ENCODE measurements at regions of chr17 and their contacts with region 1.

Region 1: GRCh38 chr17:78745407-78746088 is 36.5 kb downstream of the CYTH1 start:
- DNase-seq: peak in 4 of 5 donors; percentile 56 to 61 (median 60)
- H3K4me3 ChIP-seq: peak overlapping the region; percentile 9 to 31
- H3K4me3 Mint-ChIP-seq: peak overlapping the region; percentile 67 to 89 (median 78)
- H3K27ac ChIP-seq: peak overlapping the region; percentile 73
- H3K27ac Mint-ChIP-seq: peak overlapping the region; percentile 88 to 98 (median 94)
- H3K4me1 ChIP-seq: peaks cover 98% of the 10 kb centered on the region
- H3K4me1 Mint-ChIP-seq: peaks cover 76 to 98% (median 85%) of the 10 kb centered on the region in 4 donors
- H3K27me3 ChIP-seq: no peaks in the 10 kb centered on the region
- H3K27me3 Mint-ChIP-seq: no peaks in the 10 kb centered on the region

Region 2: GRCh38 chr17:78723001-78723796 is 22.3 kb before region 1 on chr17:
- CTCF ChIA-PET with region 1: interaction called, 8 read pairs
- POLR2A ChIA-PET with region 1: interaction called, 125 read pairs
- intact Hi-C with region 1: no loop called
- DNase-seq: no peak
- H3K4me3 ChIP-seq: no peak overlapping the region
- H3K4me3 Mint-ChIP-seq: peak overlapping the region; percentile 56 to 91 (median 70)
- H3K27ac ChIP-seq: no peak overlapping the region
- H3K27ac Mint-ChIP-seq: peak overlapping the region in 6 of 7 donors; percentile 77 to 92 (median 86)
- H3K4me1 ChIP-seq: peaks cover 100% of the 10 kb centered on the region
- H3K4me1 Mint-ChIP-seq: peaks cover 77 to 97% (median 90%) of the 10 kb centered on the region in 4 donors
- H3K27me3 ChIP-seq: no peaks in the 10 kb centered on the region
- H3K27me3 Mint-ChIP-seq: no peaks in the 10 kb centered on the region

Region 3: DNA sequence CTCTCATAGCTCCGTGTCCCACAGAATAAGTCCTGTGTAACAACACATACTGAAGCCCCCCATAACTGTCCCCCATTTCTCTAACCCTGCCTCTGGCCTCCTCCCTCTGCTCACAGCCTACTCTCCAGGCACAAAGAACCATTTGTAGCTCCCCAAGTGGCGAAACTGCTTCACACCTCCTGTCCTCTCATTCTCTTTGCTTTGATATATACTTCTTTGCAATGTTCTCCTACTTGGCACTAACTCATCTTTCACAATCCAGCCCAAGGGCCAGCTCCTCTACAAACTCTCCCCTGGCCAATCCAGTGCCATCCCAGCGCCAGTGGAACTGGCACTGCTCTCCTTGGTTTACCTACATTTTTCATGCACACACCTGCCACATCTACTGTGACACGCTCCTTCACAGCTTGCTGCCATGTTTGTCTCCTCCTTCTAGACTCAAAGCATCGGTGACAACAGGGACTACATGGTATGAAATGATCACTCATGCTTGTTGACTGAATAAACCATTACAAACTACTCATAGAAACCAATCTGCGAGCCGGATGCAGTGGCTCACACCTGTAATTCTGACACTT is 23.7 kb after region 1 on chr17:
- CTCF ChIA-PET with region 1: interaction called, 21 read pairs
- POLR2A ChIA-PET with region 1: interaction called, 961 read pairs
- intact Hi-C with region 1: no loop called
- DNase-seq: peak in 2 of 5 donors; percentile 44 to 54
- H3K4me3 ChIP-seq: peak overlapping the region in 1 of 2 donors; percentile 7
- H3K4me3 Mint-ChIP-seq: no peak overlapping the region
- H3K27ac ChIP-seq: peak overlapping the region; percentile 49
- H3K27ac Mint-ChIP-seq: no peak overlapping the region
- H3K4me1 ChIP-seq: peaks cover 98% of the 10 kb centered on the region
- H3K4me1 Mint-ChIP-seq: peaks cover 32 to 34% (median 33%) of the 10 kb centered on the region in 4 donors
- H3K27me3 ChIP-seq: no peaks in the 10 kb centered on the region
- H3K27me3 Mint-ChIP-seq: no peaks in the 10 kb centered on the region

Region 4: DNA sequence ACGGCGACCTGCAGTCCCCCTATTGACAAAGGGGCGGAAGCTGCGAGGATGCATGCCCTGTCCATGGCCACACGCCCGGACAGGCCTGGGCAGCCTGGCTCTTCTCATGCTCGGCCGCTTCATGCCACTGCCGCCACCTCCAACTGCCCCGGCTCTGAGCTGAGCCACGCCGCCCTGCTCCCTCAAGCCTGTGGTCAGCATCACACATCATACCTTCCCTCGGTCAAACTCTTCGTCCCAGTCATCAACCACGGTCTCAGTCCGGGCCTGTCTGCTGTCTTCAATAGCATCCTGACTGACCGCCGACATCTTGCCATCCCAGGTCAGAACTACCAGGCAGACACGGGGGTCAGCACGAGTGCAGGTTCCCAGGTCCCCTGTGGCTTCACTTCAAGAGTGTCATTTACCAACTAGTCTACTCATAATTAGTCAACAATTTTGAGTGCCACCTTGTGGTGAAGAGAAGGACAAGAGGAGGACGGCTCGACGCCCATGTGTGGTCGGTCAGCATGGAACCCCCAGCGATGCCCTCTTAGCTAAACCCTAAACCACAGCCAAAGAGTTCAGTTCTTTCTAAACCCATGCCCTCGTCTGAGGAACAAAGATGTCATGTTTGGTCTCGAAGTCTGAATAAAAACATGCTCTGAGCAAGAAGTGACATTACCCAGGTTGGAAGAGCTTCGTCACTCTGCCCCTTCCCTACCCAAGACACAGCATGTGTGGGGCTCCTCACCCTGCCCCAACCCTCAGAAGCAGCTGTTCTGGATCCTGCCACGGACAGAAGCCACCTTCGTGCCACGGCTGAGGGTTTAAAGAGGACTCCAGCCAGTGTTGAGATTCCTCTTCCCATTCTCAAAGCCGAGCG is 53.4 kb after region 1 on chr17:
- CTCF ChIA-PET with region 1: interaction called, 15 read pairs
- POLR2A ChIA-PET with region 1: interaction called, 4 read pairs
- intact Hi-C with region 1: loop called (anchors 1 kb)
- DNase-seq: peak in 4 of 5 donors; percentile 50 to 65 (median 57)
- H3K4me3 ChIP-seq: no peak overlapping the region
- H3K4me3 Mint-ChIP-seq: peak overlapping the region; percentile 28 to 79 (median 66)
- H3K27ac ChIP-seq: no peak overlapping the region
- H3K27ac Mint-ChIP-seq: peak overlapping the region; percentile 87 to 99 (median 94)
- H3K4me1 ChIP-seq: peaks cover 37% of the 10 kb centered on the region
- H3K4me1 Mint-ChIP-seq: peaks cover 46 to 79% (median 62%) of the 10 kb centered on the region in 4 donors
- H3K27me3 ChIP-seq: no peaks in the 10 kb centered on the region
- H3K27me3 Mint-ChIP-seq: no peaks in the 10 kb centered on the region

Region 5: DNA sequence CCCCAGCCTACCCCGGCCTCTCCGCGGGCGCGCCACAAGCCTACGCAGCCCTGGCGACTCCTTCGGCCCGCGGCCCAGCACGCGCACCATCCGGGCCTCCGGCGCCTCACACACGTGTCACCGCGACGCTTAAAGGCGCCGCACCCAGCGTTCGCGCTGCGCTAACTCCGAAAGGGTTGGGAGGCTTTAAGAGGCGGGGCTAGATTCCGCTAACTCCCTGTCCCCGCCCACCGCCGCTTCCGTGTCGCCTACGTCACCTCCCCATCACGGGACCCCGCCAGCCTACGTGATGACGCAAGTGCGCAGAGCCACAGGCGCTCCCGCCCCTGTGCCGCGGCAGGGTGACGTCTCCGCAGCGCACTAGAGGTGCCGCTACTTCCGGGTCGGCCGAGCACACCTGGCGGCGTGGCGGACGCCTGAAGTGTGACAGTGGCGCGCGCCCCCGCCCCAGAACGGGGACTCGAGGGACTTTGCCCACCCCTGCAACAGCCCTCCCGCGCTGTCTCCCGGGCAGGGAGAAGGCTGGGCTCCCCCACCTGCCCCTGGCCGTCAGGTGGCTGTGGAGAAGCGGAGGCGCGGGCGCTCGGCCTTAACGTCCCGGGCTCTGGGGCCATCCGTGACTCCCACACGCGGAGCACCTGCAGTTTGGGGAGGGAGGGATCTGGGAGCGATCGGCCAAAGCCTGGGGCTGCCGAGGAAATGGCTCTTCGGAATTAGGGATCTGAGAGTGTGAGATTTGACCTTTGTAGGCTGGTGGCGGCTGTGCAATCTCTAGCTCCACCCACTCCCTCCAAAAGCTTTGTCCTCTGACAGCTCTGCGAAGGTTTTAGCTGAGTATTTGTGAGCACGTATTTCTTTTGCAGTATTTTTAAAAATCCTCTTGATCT is 95.4 kb after region 1 on chr17 and contains the start of gene USP36:
- CTCF ChIA-PET with region 1: interaction called, 5 read pairs
- POLR2A ChIA-PET with region 1: interaction called, 6 read pairs
- intact Hi-C with region 1: loop called (anchors 1 kb)
- DNase-seq: peak; percentile 99 to 100 (median 99)
- H3K4me3 ChIP-seq: peak within 1 kb of the TSS; percentile 74 to 89
- H3K4me3 Mint-ChIP-seq: peak within 1 kb of the TSS; percentile 93 to 99 (median 96)
- H3K27ac ChIP-seq: peak within 1 kb of the TSS; percentile 95
- H3K27ac Mint-ChIP-seq: peak within 1 kb of the TSS; percentile 93 to 99 (median 99)
- H3K4me1 ChIP-seq: peaks cover 40% of the 10 kb centered on the region
- H3K4me1 Mint-ChIP-seq: peaks cover 37 to 73% (median 49%) of the 10 kb centered on the region in 4 donors
- H3K27me3 ChIP-seq: no peaks in the 10 kb centered on the region
- H3K27me3 Mint-ChIP-seq: no peaks in the 10 kb centered on the region
- total RNA-seq, gene USP36: 181 to 183 TPM